ENCODE measurements at regions of chr14 and their contacts with region 1.

Region 1: DNA sequence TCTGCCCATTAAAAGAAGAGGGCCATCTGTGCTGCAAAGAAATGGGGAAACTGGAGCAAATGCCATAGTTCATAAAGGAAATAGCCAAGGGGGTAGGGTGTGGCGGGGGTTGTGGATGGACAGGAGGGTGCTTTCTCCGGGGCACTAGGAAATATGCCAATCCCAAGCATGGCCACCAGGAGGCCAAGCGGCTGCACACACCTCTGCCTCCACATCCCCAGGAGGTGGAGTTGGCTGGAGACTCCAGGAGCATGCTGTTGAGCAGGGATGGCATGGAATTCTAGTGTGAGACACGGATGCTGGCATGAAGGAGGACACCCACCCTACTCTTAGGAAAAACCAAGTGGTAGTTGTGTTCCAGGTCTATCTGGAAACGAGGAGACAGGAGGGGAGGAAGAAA is 25.2 kb downstream of the NID2 start:
- ATAC-seq: peak in 4 of 8 experiments; percentile 33 to 93 (median 71)
- H3K4me3 ChIP-seq: no peak overlapping the region
- H3K27ac ChIP-seq: no peak overlapping the region
- H3K4me1 ChIP-seq: no peaks in the 10 kb centered on the region

Region 2: GRCh38 chr14:51889851-51890250 is 153.8 kb before region 1 on chr14:
- in situ Hi-C with region 1: no loop called
- ATAC-seq: no peak
- H3K4me3 ChIP-seq: no peak overlapping the region
- H3K27ac ChIP-seq: no peak overlapping the region
- H3K4me1 ChIP-seq: no peaks in the 10 kb centered on the region

Region 3: GRCh38 chr14:52272375-52272774 is 228.7 kb after region 1 on chr14:
- in situ Hi-C with region 1: loop called in 1 of 9 experiments (anchors 25 kb)
- ATAC-seq: peak in 3 of 8 experiments; percentile 39 to 68 (median 49)
- H3K4me3 ChIP-seq: no peak overlapping the region
- H3K27ac ChIP-seq: no peak overlapping the region
- H3K4me1 ChIP-seq: peaks cover 0 to 5% of the 10 kb centered on the region in 2 donors

Region 4: DNA sequence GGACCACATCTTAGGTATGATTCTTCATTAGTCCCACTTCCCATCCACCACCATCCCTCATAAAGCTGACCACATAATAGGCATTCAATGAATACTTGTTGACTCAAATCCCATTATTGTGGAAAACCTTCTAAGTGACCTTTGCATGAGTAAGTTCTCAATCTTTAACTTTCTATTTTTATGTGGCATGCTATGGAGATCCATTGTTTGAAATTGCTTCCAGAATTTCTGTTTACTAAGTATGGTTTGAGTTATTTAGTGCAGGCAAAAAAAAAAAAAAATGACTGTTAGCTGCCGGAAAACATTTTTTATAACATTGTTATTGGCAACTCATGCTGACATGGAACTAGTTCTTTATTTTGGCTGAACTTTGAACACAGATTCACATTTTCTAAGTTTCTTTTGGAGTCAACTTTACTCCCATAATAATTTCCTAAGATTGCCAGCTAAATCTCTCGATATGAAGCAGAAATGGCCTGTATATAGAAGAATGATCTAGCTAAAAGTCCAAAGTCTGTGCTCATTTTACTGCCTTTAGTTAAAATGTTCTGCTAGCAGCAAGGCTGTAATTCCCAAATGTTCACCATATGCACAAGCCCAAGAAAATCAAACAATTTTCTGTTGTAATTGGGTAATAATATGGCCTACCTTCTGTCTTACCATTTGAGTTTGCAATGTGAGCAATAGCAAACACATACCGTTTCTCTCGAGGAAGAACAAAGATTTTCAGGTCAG is 348.4 kb after region 1 on chr14:
- in situ Hi-C with region 1: no loop called
- ATAC-seq: no peak
- H3K4me3 ChIP-seq: no peak overlapping the region
- H3K27ac ChIP-seq: no peak overlapping the region
- H3K4me1 ChIP-seq: no peaks in the 10 kb centered on the region